HepG2 (cell line): ENCODE measurements at regions of chr19 and their contacts with region 1.

Region 1: GRCh38 chr19:19269952-19270694 is 3.0 kb downstream of the TM6SF2 start:
- DNase-seq: no peak
- ATAC-seq: no peak
- H3K4me3 ChIP-seq: no peak overlapping the region
- H3K27ac ChIP-seq: no peak overlapping the region
- H3K4me1 ChIP-seq: peaks cover 31% of the 10 kb centered on the region
- H3K27me3 ChIP-seq: no peaks in the 10 kb centered on the region; a peak in 1 of 5 replicates
- CTCF ChIP-seq: no peak
- EP300 ChIP-seq: no peak
- POLR2A ChIP-seq: no peak
- RAD21 ChIP-seq: no peak

Region 2: GRCh38 chr19:19170053-19170872 is 99.9 kb before region 1 on chr19 and contains the start of gene MEF2B:
- CTCF ChIA-PET with region 1: no interaction called
- POLR2A ChIA-PET with region 1: no interaction called
- in situ Hi-C with region 1: no loop called
- intact Hi-C with region 1: no loop called
- DNase-seq: peak; percentile 80
- ATAC-seq: peak; percentile 92
- H3K4me3 ChIP-seq: peak within 1 kb of the TSS; percentile 35 to 70 (median 54)
- H3K27ac ChIP-seq: no peak within 1 kb of the TSS
- H3K4me1 ChIP-seq: peaks cover 63% of the 10 kb centered on the region
- H3K27me3 ChIP-seq: no peaks in the 10 kb centered on the region
- CTCF ChIP-seq: no peak
- EP300 ChIP-seq: no peak
- POLR2A ChIP-seq: peak in 1 of 2 experiments; percentile 46; a peak in 2 of 4 replicates
- RAD21 ChIP-seq: no peak
- total RNA-seq, gene MEF2B: 0.44 and 1.2 TPM in 2 replicates

Region 3: GRCh38 chr19:19224852-19225494 is 45.1 kb before region 1 on chr19:
- CTCF ChIA-PET with region 1: no interaction called
- POLR2A ChIA-PET with region 1: no interaction called
- in situ Hi-C with region 1: no loop called
- intact Hi-C with region 1: loop called (anchors 5 kb)
- DNase-seq: peak; percentile 78
- ATAC-seq: peak; percentile 89
- H3K4me3 ChIP-seq: peak overlapping the region in 2 of 3 experiments; percentile 45 to 64; a peak in 4 of 6 replicates
- H3K27ac ChIP-seq: no peak overlapping the region
- H3K4me1 ChIP-seq: peaks cover 32% of the 10 kb centered on the region
- H3K27me3 ChIP-seq: peaks cover 6 to 44% of the 10 kb centered on the region in 2 experiments
- CTCF ChIP-seq: peak; percentile 93
- EP300 ChIP-seq: no peak
- POLR2A ChIP-seq: 0 out of 4 replicates have a peak, but pooled peaks of 1 of the 2 experiments have one; percentile 30
- RAD21 ChIP-seq: peak; percentile 83

Region 4: GRCh38 chr19:19320362-19321142 is 50.4 kb after region 1 on chr19 and contains the starts of genes MAU2 and SUGP1:
- CTCF ChIA-PET with region 1: no interaction called
- POLR2A ChIA-PET with region 1: no interaction called
- in situ Hi-C with region 1: no loop called
- intact Hi-C with region 1: loop called (anchors 5 kb)
- DNase-seq: peak; percentile 92
- ATAC-seq: peak; percentile 95
- H3K4me3 ChIP-seq: peak within 1 kb of the TSS; percentile 82 to 100 (median 95)
- H3K27ac ChIP-seq: peak within 1 kb of the TSS; percentile 85
- H3K4me1 ChIP-seq: peaks cover 26% of the 10 kb centered on the region
- H3K27me3 ChIP-seq: no peaks in the 10 kb centered on the region; a peak in 1 of 5 replicates
- CTCF ChIP-seq: peak; percentile 38; the same call in 1 of the 2 replicates
- EP300 ChIP-seq: no peak
- POLR2A ChIP-seq: peak; percentile 86 to 87
- RAD21 ChIP-seq: peak; percentile 49; the same call in 1 of the 2 replicates
- total RNA-seq, gene MAU2: 11.2 and 16.8 TPM in 2 replicates
- total RNA-seq, gene SUGP1: 17.7 and 25.9 TPM in 2 replicates